Left ventricle myocardium inferior (tissue), 1 donor: ENCODE measurements at regions of chr3 and their contacts with region 1.

Region 1: GRCh38 chr3:69665026-69665737 is 74.1 kb upstream of the MITF start:
- DNase-seq: no peak
- H3K4me3 ChIP-seq: no peak overlapping the region
- H3K27ac ChIP-seq: peak overlapping the region; percentile 63
- H3K4me1 ChIP-seq: peaks cover 21% of the 10 kb centered on the region
- H3K27me3 ChIP-seq: no peaks in the 10 kb centered on the region
- CTCF ChIP-seq: no peak

Region 2: GRCh38 chr3:69425261-69425660 is 239.9 kb before region 1 on chr3:
- intact Hi-C with region 1: loop called (anchors 10 kb)
- DNase-seq: no peak
- H3K4me3 ChIP-seq: no peak overlapping the region
- H3K27ac ChIP-seq: no peak overlapping the region
- H3K4me1 ChIP-seq: peaks cover 19% of the 10 kb centered on the region
- H3K27me3 ChIP-seq: no peaks in the 10 kb centered on the region
- CTCF ChIP-seq: peak; percentile 70

Region 3: DNA sequence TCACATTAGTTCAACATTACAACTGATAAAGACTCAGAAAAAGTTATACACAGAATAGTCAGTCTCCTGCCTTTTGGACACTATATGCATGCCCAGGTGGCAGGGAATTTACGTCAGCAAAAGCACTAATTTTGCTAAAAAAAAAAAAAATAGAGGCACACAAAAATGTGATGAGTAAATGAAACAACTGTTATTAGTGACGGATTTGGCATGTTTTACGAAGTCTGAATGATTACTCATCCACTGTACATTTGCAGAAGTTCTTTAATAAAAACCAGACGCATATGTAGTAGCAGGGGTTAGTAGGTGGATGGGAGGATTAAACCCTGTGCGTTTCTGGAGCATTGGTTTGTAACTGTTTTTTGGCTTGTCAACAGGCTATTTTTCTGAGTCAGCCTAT is 173.0 kb after region 1 on chr3:
- intact Hi-C with region 1: no loop called
- DNase-seq: no peak
- H3K4me3 ChIP-seq: no peak overlapping the region
- H3K27ac ChIP-seq: no peak overlapping the region
- H3K4me1 ChIP-seq: peaks cover 65% of the 10 kb centered on the region
- H3K27me3 ChIP-seq: no peaks in the 10 kb centered on the region
- CTCF ChIP-seq: no peak

Region 4: DNA sequence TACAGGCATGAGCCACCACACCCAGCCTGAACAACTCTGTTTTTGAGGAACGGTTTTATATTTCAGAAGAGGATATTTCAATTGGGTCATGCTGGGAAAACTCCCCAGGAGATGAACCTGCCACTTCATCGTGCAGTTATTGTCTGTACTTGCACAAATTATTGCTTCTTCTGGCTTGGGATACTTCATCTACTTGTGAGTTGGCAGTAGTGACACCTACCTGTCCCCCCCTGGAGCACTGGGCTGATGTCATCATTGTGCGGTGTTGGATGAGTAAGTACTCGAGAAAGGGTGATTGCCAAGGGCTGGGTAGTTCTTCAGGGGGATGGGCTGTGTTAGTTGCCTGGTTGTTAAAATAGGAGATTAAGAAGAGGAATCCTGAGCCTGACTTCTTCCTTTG is 249.2 kb after region 1 on chr3:
- intact Hi-C with region 1: no loop called
- DNase-seq: no peak
- H3K4me3 ChIP-seq: no peak overlapping the region
- H3K27ac ChIP-seq: peak overlapping the region; percentile 22
- H3K4me1 ChIP-seq: peaks cover 18% of the 10 kb centered on the region
- H3K27me3 ChIP-seq: no peaks in the 10 kb centered on the region
- CTCF ChIP-seq: no peak